ENCODE measurements at regions of chr4 and their contacts with region 1.

Region 1: GRCh38 chr4:67762086-67762485 is 7.9 kb upstream of the GNRHR start:
- DNase-seq: no peak
- H3K4me3 ChIP-seq: no peak overlapping the region
- H3K27ac ChIP-seq: no peak overlapping the region
- H3K4me1 ChIP-seq: no peaks in the 10 kb centered on the region
- H3K27me3 ChIP-seq: no peaks in the 10 kb centered on the region
- CTCF ChIP-seq: no peak

Region 2: DNA sequence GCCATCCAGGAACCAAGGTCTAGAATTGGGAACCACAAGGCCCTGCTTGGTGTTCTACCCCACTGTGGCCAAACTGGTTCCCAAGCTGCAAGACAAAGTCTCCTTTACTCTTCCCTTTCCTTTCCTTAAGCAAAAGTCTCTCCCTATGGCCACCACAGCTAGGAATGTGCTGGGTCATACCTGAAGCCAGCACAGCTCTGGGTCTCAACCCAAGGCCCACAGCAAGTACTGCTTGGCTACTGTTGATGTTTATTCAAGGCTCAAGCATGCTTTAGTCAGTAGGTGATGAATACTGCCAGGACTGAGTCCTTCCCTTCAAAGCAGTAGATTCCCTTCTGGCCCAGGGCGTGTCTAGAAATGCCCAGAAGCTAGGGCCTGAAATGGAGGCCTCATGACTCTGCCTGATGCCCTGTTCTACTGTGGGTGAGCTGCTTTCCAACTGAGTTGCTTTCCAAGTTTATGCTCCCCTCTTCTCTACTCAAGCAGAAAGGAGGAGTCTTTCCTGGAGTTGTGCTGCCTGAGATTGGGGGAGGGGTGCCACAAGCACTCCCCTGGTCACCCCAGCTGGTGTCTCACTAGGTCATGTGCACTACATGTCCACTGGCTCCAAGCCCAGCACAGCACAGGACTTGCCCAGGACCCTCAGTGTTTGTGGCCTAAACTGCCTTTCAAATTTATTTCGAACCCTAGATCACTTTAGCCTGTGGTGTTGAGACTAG is 158.6 kb before region 1 on chr4:
- CTCF ChIA-PET with region 1: no interaction called
- POLR2A ChIA-PET with region 1: no interaction called
- intact Hi-C with region 1: no loop called
- DNase-seq: no peak
- H3K4me3 ChIP-seq: no peak overlapping the region
- H3K27ac ChIP-seq: no peak overlapping the region
- H3K4me1 ChIP-seq: no peaks in the 10 kb centered on the region
- H3K27me3 ChIP-seq: no peaks in the 10 kb centered on the region
- CTCF ChIP-seq: no peak

Region 3: DNA sequence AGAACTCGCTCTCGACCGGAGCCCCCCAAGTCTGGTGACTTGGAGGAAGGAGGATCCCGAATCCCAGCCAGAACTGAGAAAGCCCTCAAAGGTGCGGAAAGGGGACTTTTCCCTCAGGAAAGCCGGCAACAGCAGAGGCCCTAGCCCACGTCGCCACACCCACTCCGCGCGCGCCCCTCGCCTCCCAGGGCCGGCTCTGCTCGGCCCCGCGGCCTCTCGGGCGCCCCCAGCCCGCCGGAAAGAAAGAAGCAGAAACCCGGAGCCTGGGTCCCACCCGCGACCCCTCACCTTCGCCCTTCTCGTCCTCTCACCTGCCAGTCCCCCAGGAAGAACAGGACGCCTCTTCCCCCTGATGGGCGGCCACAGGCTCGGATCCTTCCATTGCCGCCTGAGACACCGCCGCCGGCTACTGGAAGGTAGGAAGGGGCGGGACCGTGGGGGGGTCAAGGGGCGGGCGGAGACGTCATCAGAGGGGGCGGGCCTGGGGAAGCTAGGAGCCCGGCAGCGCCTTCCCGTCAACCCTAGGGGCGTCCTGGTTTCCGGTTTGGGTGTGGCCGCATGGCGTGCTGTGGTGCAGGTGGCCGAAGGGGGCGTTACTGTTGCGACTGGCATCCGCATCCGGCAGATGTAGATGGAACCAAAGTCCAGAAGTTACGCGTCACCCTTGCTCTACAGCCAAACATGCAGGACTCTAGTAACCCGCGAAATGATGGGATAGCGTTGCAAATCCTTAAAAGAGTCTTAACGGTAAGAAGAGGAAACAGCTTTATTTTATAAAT is 61.2 kb before region 1 on chr4 and contains the start of gene UBA6:
- CTCF ChIA-PET with region 1: no interaction called
- POLR2A ChIA-PET with region 1: interaction called, 19 read pairs
- intact Hi-C with region 1: no loop called
- DNase-seq: peak; percentile 89
- H3K4me3 ChIP-seq: peak within 1 kb of the TSS; percentile 84
- H3K27ac ChIP-seq: peak within 1 kb of the TSS; percentile 86
- H3K4me1 ChIP-seq: peaks cover 12% of the 10 kb centered on the region
- H3K27me3 ChIP-seq: no peaks in the 10 kb centered on the region
- CTCF ChIP-seq: peak; percentile 54; the same call in 1 of the 2 replicates
- total RNA-seq, gene UBA6: 51.0 and 64.2 TPM in 2 replicates

Region 4: DNA sequence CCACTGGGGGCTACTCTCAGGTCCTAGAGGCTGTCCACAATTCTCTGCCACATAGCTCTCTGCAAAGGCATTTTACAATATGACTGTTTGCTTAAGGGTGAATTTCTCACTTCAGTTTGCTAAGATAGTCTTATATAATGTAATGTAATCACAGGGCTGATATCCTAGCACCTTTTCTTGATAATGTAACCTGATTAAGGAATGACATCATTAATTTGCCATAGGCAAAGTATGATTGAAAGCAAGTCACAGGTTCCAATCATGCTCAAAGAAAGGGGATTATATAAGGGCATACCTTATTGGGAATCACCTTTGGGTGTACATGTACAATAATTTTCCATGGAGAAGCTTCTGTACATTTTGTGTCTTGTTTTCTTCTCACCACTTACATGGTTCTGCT is 26.8 kb before region 1 on chr4:
- CTCF ChIA-PET with region 1: no interaction called
- POLR2A ChIA-PET with region 1: no interaction called
- intact Hi-C with region 1: loop called (anchors 2 kb)
- DNase-seq: no peak
- H3K4me3 ChIP-seq: no peak overlapping the region
- H3K27ac ChIP-seq: no peak overlapping the region
- H3K4me1 ChIP-seq: no peaks in the 10 kb centered on the region
- H3K27me3 ChIP-seq: no peaks in the 10 kb centered on the region
- CTCF ChIP-seq: no peak

Region 5: GRCh38 chr4:67988991-67989390 is 226.9 kb after region 1 on chr4:
- CTCF ChIA-PET with region 1: no interaction called
- POLR2A ChIA-PET with region 1: no interaction called
- intact Hi-C with region 1: no loop called
- DNase-seq: no peak
- H3K4me3 ChIP-seq: no peak overlapping the region
- H3K27ac ChIP-seq: no peak overlapping the region
- H3K4me1 ChIP-seq: no peaks in the 10 kb centered on the region
- H3K27me3 ChIP-seq: no peaks in the 10 kb centered on the region
- CTCF ChIP-seq: no peak

Measured in PC-9 (cell line).